ENCODE measurements at regions of chr6 and their contacts with region 1.

Region 1: GRCh38 chr6:152863618-152864326 is 113.2 kb downstream of the VIP start:
- DNase-seq: peak; percentile 91
- H3K4me3 Mint-ChIP-seq: no peak overlapping the region
- H3K27ac Mint-ChIP-seq: no peak overlapping the region
- H3K4me1 Mint-ChIP-seq: no peaks in the 10 kb centered on the region
- H3K27me3 Mint-ChIP-seq: peaks cover 97% of the 10 kb centered on the region
- CTCF ChIP-seq: peak; percentile 64

Region 2: DNA sequence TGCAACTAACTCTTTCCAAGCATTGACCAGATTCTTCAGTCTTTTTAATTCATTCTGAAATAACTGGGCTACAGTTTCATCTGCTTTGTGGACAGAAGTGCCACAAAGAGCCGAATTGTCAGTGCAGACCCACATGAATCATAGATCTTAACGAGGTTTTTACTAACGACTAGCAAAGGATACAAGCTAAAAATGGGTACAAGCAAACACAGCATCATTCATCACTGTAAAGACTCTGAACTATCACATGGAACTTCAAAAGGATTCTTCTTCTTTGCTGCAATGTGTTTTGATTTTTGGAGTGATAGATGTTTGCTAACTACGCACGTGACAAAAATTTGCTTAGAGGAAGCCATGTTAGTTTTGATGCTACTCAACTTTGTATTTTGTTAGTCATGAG is 829.1 kb before region 1 on chr6:
- CTCF ChIA-PET with region 1: no interaction called
- POLR2A ChIA-PET with region 1: no interaction called
- intact Hi-C with region 1: no loop called
- DNase-seq: no peak
- H3K4me3 Mint-ChIP-seq: no peak overlapping the region
- H3K27ac Mint-ChIP-seq: no peak overlapping the region
- H3K4me1 Mint-ChIP-seq: no peaks in the 10 kb centered on the region
- H3K27me3 Mint-ChIP-seq: no peaks in the 10 kb centered on the region
- CTCF ChIP-seq: no peak

Region 3: GRCh38 chr6:152716322-152716721 is 147.4 kb before region 1 on chr6:
- CTCF ChIA-PET with region 1: interaction called, 3 read pairs
- POLR2A ChIA-PET with region 1: no interaction called
- intact Hi-C with region 1: loop called (anchors 5 kb)
- DNase-seq: no peak
- H3K4me3 Mint-ChIP-seq: no peak overlapping the region
- H3K27ac Mint-ChIP-seq: no peak overlapping the region
- H3K4me1 Mint-ChIP-seq: peaks cover 7% of the 10 kb centered on the region
- H3K27me3 Mint-ChIP-seq: peaks cover 11% of the 10 kb centered on the region
- CTCF ChIP-seq: peak; percentile 23

Region 4: DNA sequence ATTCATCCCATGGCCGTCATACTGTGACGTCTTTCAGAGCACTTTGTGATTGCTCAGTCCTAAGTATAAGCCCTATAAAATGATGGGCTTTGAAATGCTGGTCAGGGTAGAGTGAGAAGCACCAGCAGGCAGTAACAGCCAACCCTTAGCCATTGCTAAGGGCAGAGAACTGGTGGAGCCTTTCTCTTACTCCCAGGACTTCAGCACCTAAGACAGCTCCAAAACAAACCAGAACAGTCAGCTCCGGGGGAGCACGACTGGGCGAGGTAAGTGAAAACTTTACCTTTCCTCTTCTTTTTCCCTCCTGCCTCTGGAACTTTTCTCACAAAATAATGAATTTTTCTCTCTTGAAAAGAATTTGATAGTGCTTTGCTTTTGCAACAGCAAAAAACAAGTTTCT is 113.1 kb before region 1 on chr6 and contains the start of gene VIP:
- CTCF ChIA-PET with region 1: interaction called, 6 read pairs
- POLR2A ChIA-PET with region 1: no interaction called
- intact Hi-C with region 1: loop called (anchors 2 kb)
- DNase-seq: peak; percentile 75
- H3K4me3 Mint-ChIP-seq: no peak within 1 kb of the TSS
- H3K27ac Mint-ChIP-seq: no peak within 1 kb of the TSS
- H3K4me1 Mint-ChIP-seq: peaks cover 10% of the 10 kb centered on the region
- H3K27me3 Mint-ChIP-seq: peaks cover 51% of the 10 kb centered on the region
- CTCF ChIP-seq: no peak
- total RNA-seq, gene VIP: not detected in 2 replicates

Region 5: DNA sequence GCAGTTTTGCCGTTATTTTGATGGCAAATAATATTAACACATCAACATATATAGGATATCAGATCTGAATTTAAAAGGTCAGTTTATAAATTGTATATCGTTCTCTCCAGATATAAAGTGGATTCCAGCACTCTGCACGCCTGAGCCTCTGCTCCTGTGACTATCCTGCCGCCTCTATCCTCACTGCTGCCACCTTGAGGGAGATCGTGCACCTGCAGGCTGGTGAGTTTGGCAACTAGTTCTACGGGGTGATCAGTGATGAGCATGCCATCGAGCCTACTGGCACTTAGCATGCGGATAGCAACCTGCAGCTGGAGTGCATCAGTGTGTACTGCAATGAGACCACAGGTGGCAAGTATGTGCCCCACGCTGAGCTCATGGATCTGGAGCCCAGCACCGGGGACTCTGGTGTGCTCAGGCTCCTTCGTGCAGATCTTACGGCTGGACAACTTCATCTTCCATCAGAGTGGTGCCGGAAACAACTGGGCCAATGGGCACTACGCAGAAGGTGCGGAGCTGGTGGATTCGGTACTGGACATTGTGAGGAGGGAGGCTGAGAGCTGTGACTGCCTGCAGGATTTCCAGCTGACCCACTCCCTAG is 34.1 kb after region 1 on chr6:
- CTCF ChIA-PET with region 1: interaction called, 6 read pairs
- POLR2A ChIA-PET with region 1: no interaction called
- intact Hi-C with region 1: loop called (anchors 5 kb)
- DNase-seq: peak; percentile 79
- H3K4me3 Mint-ChIP-seq: no peak overlapping the region
- H3K27ac Mint-ChIP-seq: no peak overlapping the region
- H3K4me1 Mint-ChIP-seq: no peaks in the 10 kb centered on the region
- H3K27me3 Mint-ChIP-seq: peaks cover 100% of the 10 kb centered on the region
- CTCF ChIP-seq: peak; percentile 79

Region 6: GRCh38 chr6:152948150-152948768 is 84.5 kb after region 1 on chr6:
- CTCF ChIA-PET with region 1: interaction called, 130 read pairs
- POLR2A ChIA-PET with region 1: interaction called, 9 read pairs
- intact Hi-C with region 1: loop called (anchors 1 kb)
- DNase-seq: peak; percentile 71
- H3K4me3 Mint-ChIP-seq: no peak overlapping the region
- H3K27ac Mint-ChIP-seq: no peak overlapping the region
- H3K4me1 Mint-ChIP-seq: peaks cover 15% of the 10 kb centered on the region
- H3K27me3 Mint-ChIP-seq: peaks cover 19% of the 10 kb centered on the region
- CTCF ChIP-seq: peak; percentile 77

Region 7: GRCh38 chr6:153023977-153024708 is 160.4 kb after region 1 on chr6:
- CTCF ChIA-PET with region 1: interaction called, 4 read pairs
- POLR2A ChIA-PET with region 1: no interaction called
- intact Hi-C with region 1: loop called (anchors 1 kb)
- DNase-seq: peak; percentile 70
- H3K4me3 Mint-ChIP-seq: no peak overlapping the region
- H3K27ac Mint-ChIP-seq: no peak overlapping the region
- H3K4me1 Mint-ChIP-seq: peaks cover 6% of the 10 kb centered on the region
- H3K27me3 Mint-ChIP-seq: no peaks in the 10 kb centered on the region
- CTCF ChIP-seq: peak; percentile 70

Region 8: GRCh38 chr6:153312641-153313040 is 448.9 kb after region 1 on chr6:
- CTCF ChIA-PET with region 1: no interaction called
- POLR2A ChIA-PET with region 1: no interaction called
- intact Hi-C with region 1: loop called (anchors 10 kb)
- DNase-seq: peak; percentile 87
- H3K4me3 Mint-ChIP-seq: no peak overlapping the region
- H3K27ac Mint-ChIP-seq: no peak overlapping the region
- H3K4me1 Mint-ChIP-seq: no peaks in the 10 kb centered on the region
- H3K27me3 Mint-ChIP-seq: no peaks in the 10 kb centered on the region
- CTCF ChIP-seq: peak; percentile 28

Measured in MCF 10A (cell line).